GM12878 (cell line): ENCODE measurements at regions of chr1 and their contacts with region 1.

Region 1: DNA sequence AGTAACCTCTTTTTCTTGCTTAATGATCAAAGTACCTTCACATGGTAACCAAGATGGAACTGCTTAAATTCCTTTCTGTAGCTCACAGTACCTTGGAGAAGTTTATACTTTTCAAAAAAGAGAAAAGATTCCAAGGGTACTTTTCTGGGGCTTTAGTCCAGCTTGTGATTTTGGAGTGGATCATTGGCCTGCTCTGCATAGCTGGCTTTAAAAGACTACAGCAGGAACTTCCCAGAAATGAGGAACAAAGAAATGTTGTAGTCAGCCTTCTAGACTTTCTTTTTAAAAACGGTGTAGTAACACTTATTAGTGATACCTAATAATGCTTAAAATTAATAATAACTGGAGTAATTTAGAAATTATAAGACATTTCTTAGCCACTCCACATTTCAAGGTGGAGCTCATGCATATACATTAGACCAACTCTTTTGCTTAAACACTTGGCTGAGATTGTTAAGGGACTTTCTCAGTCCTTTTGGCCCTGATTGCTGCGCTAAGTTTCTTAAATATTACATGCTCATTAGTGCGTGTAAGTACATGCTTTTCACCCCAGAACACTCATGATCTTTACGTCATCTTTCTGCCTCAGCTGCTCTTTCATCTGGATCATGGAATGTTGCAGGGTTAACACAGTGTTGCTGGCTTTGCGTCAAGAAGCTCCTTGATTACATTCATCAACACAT is 57.3 kb downstream of the SDCCAG8 start:
- DNase-seq: peak; percentile 48
- ATAC-seq: peak; percentile 72
- H3K4me3 ChIP-seq: peak overlapping the region; percentile 28; the same call in 1 of the 2 replicates
- H3K27ac ChIP-seq: peak overlapping the region; percentile 94
- H3K4me1 ChIP-seq: peaks cover 32% of the 10 kb centered on the region
- H3K27me3 ChIP-seq: no peaks in the 10 kb centered on the region
- CTCF ChIP-seq: no peak
- EP300 ChIP-seq: peak in 1 of 2 experiments; percentile 52; a peak in 1 of 4 replicates
- POLR2A ChIP-seq: no peak
- RAD21 ChIP-seq: no peak

Region 2: DNA sequence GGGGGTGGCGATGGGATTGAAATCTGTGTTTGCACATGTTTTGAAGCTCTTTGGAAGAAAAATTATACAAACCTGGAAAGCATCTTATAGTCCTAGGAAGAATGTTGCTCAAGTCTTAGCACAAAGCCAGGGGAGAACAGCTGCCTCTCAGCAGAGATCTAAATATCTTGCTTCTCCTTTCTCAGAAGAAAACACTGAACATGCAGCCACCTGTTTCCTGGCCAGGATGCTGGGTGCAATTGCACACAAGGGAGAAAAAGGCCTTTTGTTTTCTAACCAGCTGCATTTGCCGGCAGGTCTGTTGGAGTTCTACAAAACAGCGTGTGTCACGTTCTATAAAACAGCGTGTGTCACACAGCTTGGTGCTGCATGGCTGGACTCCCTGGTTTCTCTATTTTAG is 529.0 kb before region 1 on chr1:
- CTCF ChIA-PET with region 1: no interaction called
- POLR2A ChIA-PET with region 1: no interaction called
- RAD21 ChIA-PET with region 1: interaction called, 3 read pairs
- SMC1A ChIA-PET with region 1: interaction called, 5 read pairs
- in situ Hi-C with region 1: loop called (anchors 25 kb)
- intact Hi-C with region 1: no loop called
- DNase-seq: no peak
- ATAC-seq: peak; percentile 41
- H3K4me3 ChIP-seq: no peak overlapping the region
- H3K27ac ChIP-seq: no peak overlapping the region
- H3K4me1 ChIP-seq: no peaks in the 10 kb centered on the region
- H3K27me3 ChIP-seq: peaks cover 0 to 2% of the 10 kb centered on the region in 2 experiments; a peak in 2 of 4 replicates
- CTCF ChIP-seq: no peak
- EP300 ChIP-seq: no peak
- POLR2A ChIP-seq: no peak
- RAD21 ChIP-seq: no peak

Region 3: DNA sequence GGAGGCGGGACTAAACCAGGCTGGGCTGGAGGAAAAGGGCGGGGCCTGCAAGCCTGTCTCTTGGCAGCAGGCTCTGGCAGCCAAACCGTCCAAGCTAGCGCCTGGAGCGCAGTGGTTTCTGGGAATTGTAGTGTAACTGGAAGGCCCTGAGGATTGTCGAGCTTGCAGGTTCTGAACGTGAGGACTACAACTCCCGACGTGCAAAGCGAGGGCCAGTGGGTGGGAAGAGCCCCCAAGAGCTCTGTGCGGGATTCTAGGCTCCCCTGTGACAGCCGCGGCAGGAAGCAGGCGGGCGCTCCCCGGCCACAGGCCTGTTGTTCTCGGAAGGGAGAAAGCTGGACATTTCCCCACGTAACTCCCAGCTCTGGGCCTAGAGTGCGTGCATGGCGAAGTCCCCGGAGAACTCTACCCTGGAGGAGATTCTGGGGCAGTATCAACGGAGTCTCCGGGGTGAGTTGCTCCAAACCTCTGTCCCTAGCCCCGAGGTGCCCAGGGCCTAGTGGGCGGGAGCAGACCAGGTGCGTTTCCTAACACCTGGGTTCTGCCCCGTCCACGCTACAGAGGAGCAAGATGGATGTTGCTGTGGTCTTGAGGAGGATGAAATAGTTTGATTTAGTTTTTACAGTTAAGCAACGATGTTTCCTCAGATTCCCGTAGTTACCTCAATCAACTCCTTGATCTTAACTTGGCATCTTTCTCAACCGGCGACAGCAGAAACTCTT is 57.1 kb before region 1 on chr1 and contains the start of gene SDCCAG8:
- CTCF ChIA-PET with region 1: interaction called, 3 read pairs
- POLR2A ChIA-PET with region 1: interaction called, 30 read pairs
- RAD21 ChIA-PET with region 1: interaction called, 39 read pairs
- SMC1A ChIA-PET with region 1: interaction called, 43 read pairs
- in situ Hi-C with region 1: no loop called
- intact Hi-C with region 1: loop called (anchors 2 kb)
- DNase-seq: peak; percentile 99
- ATAC-seq: peak; percentile 82
- H3K4me3 ChIP-seq: peak within 1 kb of the TSS; percentile 74
- H3K27ac ChIP-seq: peak within 1 kb of the TSS; percentile 95
- H3K4me1 ChIP-seq: peaks cover 5% of the 10 kb centered on the region; the same call in 1 of the 2 replicates
- H3K27me3 ChIP-seq: no peaks in the 10 kb centered on the region
- CTCF ChIP-seq: no peak
- EP300 ChIP-seq: no peak
- POLR2A ChIP-seq: peak; percentile 82
- RAD21 ChIP-seq: no peak
- polyA plus RNA-seq, gene SDCCAG8: 18.8 to 21.5 TPM

Region 4: DNA sequence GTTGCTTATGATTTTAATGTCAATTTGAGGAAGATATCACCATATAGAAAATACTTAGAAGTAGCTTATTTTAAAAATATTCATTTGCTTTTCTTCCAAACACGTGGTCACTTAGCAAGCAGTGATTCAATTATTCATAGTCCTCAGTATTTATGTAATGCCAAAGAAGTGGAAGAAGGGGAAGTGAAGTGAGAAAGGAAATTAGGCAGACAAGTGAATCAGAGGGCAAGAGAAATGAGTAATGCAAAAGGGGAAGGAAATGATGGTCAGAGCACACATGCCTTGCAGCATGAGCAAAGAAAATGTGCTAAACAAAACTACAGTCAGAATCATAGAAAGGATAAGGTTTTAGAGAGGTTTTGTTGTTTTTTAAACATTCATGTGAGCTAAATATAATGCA is 25.4 kb before region 1 on chr1:
- CTCF ChIA-PET with region 1: interaction called, 3 read pairs
- POLR2A ChIA-PET with region 1: no interaction called
- RAD21 ChIA-PET with region 1: interaction called, 5 read pairs
- SMC1A ChIA-PET with region 1: interaction called, 12 read pairs
- in situ Hi-C with region 1: no loop called
- intact Hi-C with region 1: no loop called
- DNase-seq: peak; percentile 46
- ATAC-seq: peak; percentile 84
- H3K4me3 ChIP-seq: no peak overlapping the region
- H3K27ac ChIP-seq: peak overlapping the region; percentile 58; the same call in 1 of the 2 replicates
- H3K4me1 ChIP-seq: peaks cover 13% of the 10 kb centered on the region
- H3K27me3 ChIP-seq: no peaks in the 10 kb centered on the region
- CTCF ChIP-seq: no peak
- EP300 ChIP-seq: no peak
- POLR2A ChIP-seq: no peak
- RAD21 ChIP-seq: no peak